ENCODE measurements at regions of chr18 and their contacts with region 1.

Region 1: GRCh38 chr18:70491734-70492348 is 203.0 kb downstream of the SOCS6 start:
- DNase-seq: peak; percentile 40 to 52
- H3K4me3 ChIP-seq: no peak overlapping the region
- H3K4me3 Mint-ChIP-seq: no peak overlapping the region
- H3K27ac Mint-ChIP-seq: no peak overlapping the region
- H3K4me1 ChIP-seq: no peaks in the 10 kb centered on the region
- H3K4me1 Mint-ChIP-seq: no peaks in the 10 kb centered on the region
- H3K27me3 ChIP-seq: no peaks in the 10 kb centered on the region
- H3K27me3 Mint-ChIP-seq: no peaks in the 10 kb centered on the region
- CTCF ChIP-seq: peak; percentile 39 to 57

Region 2: DNA sequence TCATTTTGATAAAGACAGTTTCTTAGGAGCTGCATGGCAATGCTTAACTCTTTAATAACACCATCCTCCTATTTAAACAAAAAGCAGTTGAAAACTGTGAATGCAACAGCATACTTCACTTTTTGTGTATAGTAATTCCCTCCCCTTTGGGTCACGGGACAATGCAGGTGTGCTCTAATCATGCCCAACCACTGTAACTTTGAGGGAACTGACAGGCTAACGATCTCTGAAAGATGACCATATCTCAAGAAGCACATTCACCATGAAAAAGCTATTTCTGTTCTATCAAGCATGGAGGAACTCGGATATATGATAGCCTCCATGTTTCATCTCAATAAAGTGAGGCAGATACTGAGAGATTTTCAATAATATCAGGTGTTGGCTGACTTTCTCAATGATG is 463.1 kb before region 1 on chr18:
- CTCF ChIA-PET with region 1: no interaction called
- POLR2A ChIA-PET with region 1: no interaction called
- intact Hi-C with region 1: no loop called
- DNase-seq: no peak
- H3K4me3 ChIP-seq: no peak overlapping the region
- H3K4me3 Mint-ChIP-seq: no peak overlapping the region
- H3K27ac Mint-ChIP-seq: no peak overlapping the region
- H3K4me1 ChIP-seq: no peaks in the 10 kb centered on the region
- H3K4me1 Mint-ChIP-seq: no peaks in the 10 kb centered on the region
- H3K27me3 ChIP-seq: no peaks in the 10 kb centered on the region
- H3K27me3 Mint-ChIP-seq: no peaks in the 10 kb centered on the region
- CTCF ChIP-seq: no peak

Region 3: GRCh38 chr18:70428439-70428838 is 63.4 kb before region 1 on chr18:
- CTCF ChIA-PET with region 1: no interaction called
- POLR2A ChIA-PET with region 1: no interaction called
- intact Hi-C with region 1: no loop called
- DNase-seq: no peak
- H3K4me3 ChIP-seq: no peak overlapping the region
- H3K4me3 Mint-ChIP-seq: no peak overlapping the region
- H3K27ac Mint-ChIP-seq: peak overlapping the region; percentile 48
- H3K4me1 ChIP-seq: peaks cover 49% of the 10 kb centered on the region
- H3K4me1 Mint-ChIP-seq: peaks cover 7% of the 10 kb centered on the region
- H3K27me3 ChIP-seq: no peaks in the 10 kb centered on the region
- H3K27me3 Mint-ChIP-seq: no peaks in the 10 kb centered on the region
- CTCF ChIP-seq: no peak

Region 4: GRCh38 chr18:70469916-70470315 is 21.9 kb before region 1 on chr18:
- CTCF ChIA-PET with region 1: no interaction called
- POLR2A ChIA-PET with region 1: no interaction called
- intact Hi-C with region 1: no loop called
- DNase-seq: no peak
- H3K4me3 ChIP-seq: no peak overlapping the region
- H3K4me3 Mint-ChIP-seq: no peak overlapping the region
- H3K27ac Mint-ChIP-seq: no peak overlapping the region
- H3K4me1 ChIP-seq: no peaks in the 10 kb centered on the region
- H3K4me1 Mint-ChIP-seq: peaks cover 11% of the 10 kb centered on the region
- H3K27me3 ChIP-seq: no peaks in the 10 kb centered on the region
- H3K27me3 Mint-ChIP-seq: no peaks in the 10 kb centered on the region
- CTCF ChIP-seq: no peak

Region 5: DNA sequence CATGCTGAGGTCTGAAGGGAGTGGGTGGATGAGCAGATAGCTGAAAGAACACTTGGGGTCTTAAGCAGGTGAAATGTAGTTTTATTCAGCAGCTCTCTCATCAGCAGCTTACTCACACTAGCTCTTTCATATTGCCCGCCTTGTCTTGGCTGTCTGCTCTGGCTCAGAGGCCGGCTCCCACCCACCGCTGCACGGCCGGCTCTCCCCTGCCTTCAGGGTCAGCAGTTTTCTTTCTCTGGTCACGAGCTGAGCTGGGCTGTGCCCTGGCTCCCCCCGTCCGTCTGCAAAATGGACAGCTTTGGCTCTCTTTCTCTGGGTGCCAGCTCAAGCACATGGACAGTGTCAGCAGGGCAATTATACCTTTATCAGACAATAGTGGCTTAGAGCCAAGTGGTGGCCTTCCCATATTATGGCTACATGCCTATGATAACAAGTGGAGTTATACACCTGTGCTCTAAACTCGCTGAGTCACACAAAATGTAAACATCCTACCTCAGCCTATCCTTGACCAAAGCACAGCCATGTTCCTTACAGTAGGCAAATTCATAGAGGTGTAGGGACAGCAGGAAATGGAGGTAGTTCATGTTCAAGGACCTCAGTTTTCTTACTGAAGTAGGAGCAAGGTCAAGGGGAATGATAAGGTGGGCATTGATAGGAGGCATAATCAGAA is 21.8 kb after region 1 on chr18:
- CTCF ChIA-PET with region 1: no interaction called
- POLR2A ChIA-PET with region 1: no interaction called
- intact Hi-C with region 1: no loop called
- DNase-seq: no peak
- H3K4me3 ChIP-seq: no peak overlapping the region
- H3K4me3 Mint-ChIP-seq: no peak overlapping the region
- H3K27ac Mint-ChIP-seq: no peak overlapping the region
- H3K4me1 ChIP-seq: no peaks in the 10 kb centered on the region
- H3K4me1 Mint-ChIP-seq: no peaks in the 10 kb centered on the region
- H3K27me3 ChIP-seq: no peaks in the 10 kb centered on the region
- H3K27me3 Mint-ChIP-seq: peaks cover 2% of the 10 kb centered on the region
- CTCF ChIP-seq: no peak

Region 6: DNA sequence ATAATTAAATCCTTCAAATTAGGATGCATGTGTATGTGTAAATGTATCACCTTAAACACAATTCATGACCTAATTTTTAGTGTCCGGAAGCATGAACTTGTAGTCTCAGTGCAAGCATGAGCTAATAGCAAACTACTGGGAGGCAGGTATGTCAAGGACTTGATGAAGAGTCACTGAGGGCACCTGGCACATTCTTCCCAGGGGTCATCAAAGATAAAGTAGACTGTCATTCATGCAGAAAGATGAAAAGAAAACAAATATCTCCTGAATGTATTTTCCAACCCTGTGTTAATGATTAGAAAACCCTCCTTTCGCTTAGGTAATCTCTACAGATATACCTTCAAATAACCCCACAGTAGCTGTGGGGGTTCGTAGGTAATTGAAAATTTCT is 31.9 kb after region 1 on chr18:
- CTCF ChIA-PET with region 1: interaction called, 3 read pairs
- POLR2A ChIA-PET with region 1: no interaction called
- intact Hi-C with region 1: loop called (anchors 2 kb)
- DNase-seq: peak; percentile 28 to 56
- H3K4me3 ChIP-seq: no peak overlapping the region
- H3K4me3 Mint-ChIP-seq: no peak overlapping the region
- H3K27ac Mint-ChIP-seq: no peak overlapping the region
- H3K4me1 ChIP-seq: peaks cover 14% of the 10 kb centered on the region
- H3K4me1 Mint-ChIP-seq: peaks cover 12% of the 10 kb centered on the region
- H3K27me3 ChIP-seq: no peaks in the 10 kb centered on the region
- H3K27me3 Mint-ChIP-seq: no peaks in the 10 kb centered on the region
- CTCF ChIP-seq: no peak

Region 7: DNA sequence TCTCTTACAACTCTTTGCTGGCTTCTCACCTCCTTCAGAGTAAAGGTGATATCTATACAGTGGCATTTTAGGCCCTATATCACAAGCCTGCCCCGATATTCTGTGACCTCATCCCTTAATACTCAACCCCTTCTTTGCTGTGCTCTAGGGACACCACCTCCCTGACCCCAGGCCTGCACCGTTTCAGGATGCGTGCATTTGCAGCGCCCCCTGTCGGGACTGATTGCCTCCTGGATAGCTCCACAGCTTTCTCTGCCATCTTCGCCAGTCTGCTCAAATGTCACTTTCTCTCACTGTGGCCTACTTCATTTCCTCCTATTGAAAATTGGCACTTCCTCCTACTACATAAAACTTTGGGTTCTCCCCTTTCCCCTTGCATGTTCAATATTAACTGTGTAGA is 86.6 kb after region 1 on chr18:
- CTCF ChIA-PET with region 1: no interaction called
- POLR2A ChIA-PET with region 1: no interaction called
- intact Hi-C with region 1: loop called (anchors 1 kb)
- DNase-seq: peak in 1 of 2 experiments; percentile 36
- H3K4me3 ChIP-seq: no peak overlapping the region
- H3K4me3 Mint-ChIP-seq: no peak overlapping the region
- H3K27ac Mint-ChIP-seq: no peak overlapping the region
- H3K4me1 ChIP-seq: no peaks in the 10 kb centered on the region
- H3K4me1 Mint-ChIP-seq: no peaks in the 10 kb centered on the region
- H3K27me3 ChIP-seq: no peaks in the 10 kb centered on the region
- H3K27me3 Mint-ChIP-seq: peaks cover 4% of the 10 kb centered on the region
- CTCF ChIP-seq: peak in 1 of 2 experiments; percentile 17

Region 8: DNA sequence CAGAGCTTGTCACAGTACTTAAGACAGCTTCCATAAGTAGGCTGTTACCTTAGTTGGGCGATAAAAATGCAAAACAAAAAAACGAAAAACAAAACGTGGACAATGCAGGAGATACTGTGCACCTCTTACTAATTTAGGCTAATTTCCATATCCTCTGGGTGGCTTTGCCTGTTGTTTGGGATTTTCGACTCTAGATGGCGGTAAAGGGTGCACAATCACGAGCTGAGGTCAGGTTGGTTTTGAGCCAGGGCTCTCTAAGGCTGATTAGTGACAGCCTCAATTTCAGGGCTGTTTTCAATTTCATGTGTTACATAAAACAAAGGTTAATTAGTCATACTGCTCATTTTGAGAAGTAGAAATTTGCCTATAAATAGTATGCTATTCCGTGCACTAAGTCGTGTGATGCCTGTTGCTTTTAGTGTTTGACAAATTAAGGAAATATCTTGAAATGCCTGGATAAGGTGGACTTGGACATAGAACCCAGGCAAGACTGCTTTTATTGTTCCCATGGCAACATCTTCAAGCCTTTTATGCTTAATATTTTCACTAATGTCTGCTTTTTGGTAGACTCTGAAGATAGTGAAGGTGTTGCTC is 290.1 kb after region 1 on chr18:
- CTCF ChIA-PET with region 1: no interaction called
- POLR2A ChIA-PET with region 1: no interaction called
- intact Hi-C with region 1: loop called (anchors 5 kb)
- DNase-seq: peak; percentile 38 to 59
- H3K4me3 ChIP-seq: no peak overlapping the region
- H3K4me3 Mint-ChIP-seq: no peak overlapping the region
- H3K27ac Mint-ChIP-seq: no peak overlapping the region
- H3K4me1 ChIP-seq: no peaks in the 10 kb centered on the region
- H3K4me1 Mint-ChIP-seq: no peaks in the 10 kb centered on the region
- H3K27me3 ChIP-seq: no peaks in the 10 kb centered on the region
- H3K27me3 Mint-ChIP-seq: peaks cover 16% of the 10 kb centered on the region
- CTCF ChIP-seq: peak; percentile 35 to 50

Measured in Caco-2 (cell line).